Activated T-helper 1 cell treated with anti-CD3 and anti-CD28 coated beads, Interleukin-12 subunit alpha, Interleukin-12 subunit beta, Interleukin-2, Interleukin-4 antibody, amounts not matched to agents 30 ng/mL and 10 ng/mL and 1 ng/mL, durations not matched to agents 14 hours and 24 hours and 36 hours (primary cell): ENCODE measurements at regions of chr14 and their contacts with region 1.

Region 1: GRCh38 chr14:56004786-56005185 is 113.4 kb upstream of the PELI2 start:
- DNase-seq: peak; percentile 6
- H3K4me3 Mint-ChIP-seq: no peak overlapping the region
- H3K27ac Mint-ChIP-seq: no peak overlapping the region
- H3K4me1 Mint-ChIP-seq: peaks cover 38% of the 10 kb centered on the region
- H3K27me3 Mint-ChIP-seq: peaks cover 32% of the 10 kb centered on the region

Region 2: DNA sequence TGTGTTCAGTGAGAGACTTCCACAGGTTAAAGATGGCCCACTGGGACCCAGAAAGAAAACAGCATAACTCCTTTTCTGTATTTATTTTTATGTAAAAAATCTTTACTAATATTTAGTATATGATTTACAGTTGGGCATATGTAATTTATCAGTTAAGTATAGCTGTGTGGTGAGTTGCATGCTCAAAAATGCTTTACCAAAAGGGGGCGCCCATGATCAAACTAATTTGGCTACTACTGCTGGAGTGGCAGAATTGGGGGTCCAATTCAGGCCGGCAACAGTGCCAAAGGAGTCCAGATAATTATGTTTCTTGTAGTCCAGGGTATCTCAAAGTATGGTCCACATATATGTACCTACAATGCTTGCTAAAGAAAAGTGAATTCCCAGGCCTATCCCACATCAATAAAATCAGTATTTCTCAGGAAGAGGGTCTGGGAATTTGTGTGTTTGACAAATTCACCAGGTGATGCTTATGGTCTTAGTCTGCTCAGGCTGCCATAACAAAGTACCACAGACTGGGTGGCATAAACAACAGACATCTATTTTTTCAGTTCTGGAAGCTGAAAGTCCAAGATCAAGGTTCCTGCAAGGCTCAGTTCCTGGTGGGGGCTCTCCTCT is 272.8 kb before region 1 on chr14:
- intact Hi-C with region 1: loop called (anchors 10 kb)
- DNase-seq: peak; percentile 21
- H3K4me3 Mint-ChIP-seq: no peak overlapping the region
- H3K27ac Mint-ChIP-seq: no peak overlapping the region
- H3K4me1 Mint-ChIP-seq: peaks cover 26% of the 10 kb centered on the region
- H3K27me3 Mint-ChIP-seq: peaks cover 4% of the 10 kb centered on the region

Region 3: DNA sequence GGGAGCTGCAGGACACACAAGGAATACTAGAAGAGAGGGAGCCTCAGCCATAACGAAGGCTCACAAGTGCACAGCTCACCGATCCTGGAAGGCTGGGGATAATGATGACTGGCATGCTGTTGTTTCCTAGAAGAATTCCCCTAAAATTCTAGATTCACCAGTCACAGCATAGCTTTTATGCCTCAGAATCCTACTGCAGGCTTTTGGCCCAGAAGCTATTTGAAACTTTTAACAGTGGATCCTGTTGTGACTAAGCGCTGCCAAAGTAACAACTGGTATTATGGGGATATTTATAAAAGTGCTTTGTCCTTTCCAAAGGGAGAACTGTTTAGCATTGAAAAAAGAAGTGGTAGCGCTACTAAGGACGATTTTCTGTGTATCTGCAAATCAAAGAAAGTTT is 100.7 kb before region 1 on chr14:
- intact Hi-C with region 1: no loop called
- DNase-seq: no peak
- H3K4me3 Mint-ChIP-seq: no peak overlapping the region
- H3K27ac Mint-ChIP-seq: no peak overlapping the region
- H3K4me1 Mint-ChIP-seq: no peaks in the 10 kb centered on the region
- H3K27me3 Mint-ChIP-seq: peaks cover 7% of the 10 kb centered on the region

Region 4: DNA sequence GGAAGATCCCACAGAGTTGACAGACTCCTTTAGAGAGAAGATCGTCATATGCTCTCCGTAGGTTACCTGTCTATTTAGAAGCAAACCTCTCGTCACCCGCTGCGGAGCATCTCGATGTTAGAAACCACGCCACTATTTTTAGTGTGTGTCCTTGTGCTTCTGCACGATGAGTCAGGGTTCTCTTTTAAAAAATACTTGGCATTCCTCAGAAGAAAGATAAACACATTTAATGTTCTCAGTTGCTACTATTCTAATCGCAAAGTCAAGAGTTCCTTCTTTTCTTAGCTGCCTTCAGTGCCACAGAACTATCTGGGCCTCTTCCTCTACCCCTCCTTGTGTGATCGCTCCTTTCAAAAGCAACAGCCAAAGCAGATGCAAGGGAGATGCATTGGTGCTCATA is 305.9 kb after region 1 on chr14:
- intact Hi-C with region 1: no loop called
- DNase-seq: no peak
- H3K4me3 Mint-ChIP-seq: no peak overlapping the region
- H3K27ac Mint-ChIP-seq: no peak overlapping the region
- H3K4me1 Mint-ChIP-seq: no peaks in the 10 kb centered on the region
- H3K27me3 Mint-ChIP-seq: peaks cover 8% of the 10 kb centered on the region